ENCODE measurements at regions of chr21 and their contacts with region 1.

Region 1: DNA sequence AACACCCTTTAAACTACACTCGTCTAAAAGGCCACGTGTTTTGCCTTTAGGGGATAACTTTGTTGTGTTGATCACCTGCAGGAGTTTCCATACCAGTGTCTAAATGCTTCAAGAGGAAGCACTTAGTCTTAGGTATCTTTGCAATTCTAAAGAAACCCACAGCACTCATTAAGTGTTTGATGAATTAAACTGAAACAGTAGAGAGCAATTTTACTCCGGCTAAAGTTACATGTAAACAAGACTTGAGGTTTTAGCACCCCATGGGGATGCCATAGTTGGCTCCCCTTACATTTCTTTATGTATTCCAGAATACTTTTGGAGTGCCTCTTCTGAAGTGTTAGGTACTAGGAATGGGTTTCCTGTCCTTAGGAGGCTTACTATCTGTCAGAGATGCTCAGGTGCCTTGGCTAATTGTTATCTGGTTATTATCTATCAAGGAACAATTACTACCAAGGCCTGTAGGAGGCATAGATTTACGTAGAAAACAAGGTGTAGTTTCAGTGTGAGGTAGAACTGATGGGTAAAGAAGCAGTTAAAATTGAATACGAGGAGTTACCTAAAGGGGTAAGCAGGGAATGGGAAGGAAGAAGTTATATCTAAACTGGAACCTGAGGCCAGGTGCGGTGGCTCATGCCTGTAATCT is 176.8 kb upstream of the SAMSN1 start:
- DNase-seq: no peak
- ATAC-seq: no peak
- H3K4me3 ChIP-seq: no peak overlapping the region
- H3K4me3 Mint-ChIP-seq: no peak overlapping the region
- H3K27ac ChIP-seq: no peak overlapping the region
- H3K27ac Mint-ChIP-seq: peak overlapping the region in 1 of 9 donors; percentile 71
- H3K4me1 ChIP-seq: no peaks in the 10 kb centered on the region
- H3K4me1 Mint-ChIP-seq: peaks cover 0 to 31% (median 5%) of the 10 kb centered on the region in 7 donors
- H3K27me3 ChIP-seq: no peaks in the 10 kb centered on the region
- H3K27me3 Mint-ChIP-seq: no peaks in the 10 kb centered on the region

Region 2: DNA sequence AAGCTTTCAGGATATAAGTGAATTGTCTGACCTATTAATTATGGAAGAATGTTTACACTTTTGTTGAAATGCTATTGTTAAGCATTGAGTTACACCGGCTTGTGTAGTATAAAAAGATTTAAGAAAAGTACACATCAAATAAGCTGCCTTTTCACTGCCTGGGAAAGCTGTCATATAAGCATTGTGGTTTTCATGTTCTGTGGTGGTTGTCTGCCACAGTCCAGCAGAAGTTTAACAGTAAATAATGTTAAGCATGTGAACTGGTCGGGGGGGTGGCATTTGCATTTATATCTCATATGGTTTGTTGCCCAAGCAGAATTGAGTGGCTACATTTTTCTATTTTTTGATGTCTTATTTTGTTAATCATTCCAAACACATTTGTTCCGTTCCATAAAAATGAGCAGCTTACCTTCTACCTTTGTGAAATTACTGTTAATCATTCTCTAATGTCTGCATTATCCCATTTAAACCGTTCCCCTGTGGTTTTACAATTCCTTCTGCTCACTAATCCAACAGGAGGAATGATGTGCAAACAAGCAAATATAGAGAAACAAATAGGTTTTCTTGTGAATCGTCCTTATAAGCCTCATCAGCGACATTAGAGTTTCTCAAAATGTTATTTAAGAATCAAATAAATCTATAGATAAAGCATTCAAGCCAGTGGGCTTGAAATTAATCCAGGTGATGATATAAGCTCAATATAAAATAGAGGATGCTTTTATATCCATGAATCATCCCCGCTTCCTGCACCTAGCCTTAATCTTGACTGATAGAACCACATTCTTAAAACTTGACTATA is 16.1 kb before region 1 on chr21:
- CTCF ChIA-PET with region 1: no interaction called
- POLR2A ChIA-PET with region 1: no interaction called
- intact Hi-C with region 1: loop called in 1 of 2 experiments (anchors 1 kb)
- DNase-seq: no peak
- ATAC-seq: no peak
- H3K4me3 ChIP-seq: no peak overlapping the region
- H3K4me3 Mint-ChIP-seq: no peak overlapping the region
- H3K27ac ChIP-seq: no peak overlapping the region
- H3K27ac Mint-ChIP-seq: no peak overlapping the region
- H3K4me1 ChIP-seq: no peaks in the 10 kb centered on the region
- H3K4me1 Mint-ChIP-seq: peaks cover 0 to 15% (median 0%) of the 10 kb centered on the region in 7 donors
- H3K27me3 ChIP-seq: no peaks in the 10 kb centered on the region
- H3K27me3 Mint-ChIP-seq: no peaks in the 10 kb centered on the region

Region 3: GRCh38 chr21:14773777-14774345 is 50.9 kb after region 1 on chr21:
- CTCF ChIA-PET with region 1: no interaction called
- POLR2A ChIA-PET with region 1: no interaction called
- intact Hi-C with region 1: no loop called
- DNase-seq: peak in 8 of 9 donors; percentile 8 to 57 (median 37)
- ATAC-seq: peak; percentile 74
- H3K4me3 ChIP-seq: no peak overlapping the region
- H3K4me3 Mint-ChIP-seq: no peak overlapping the region
- H3K27ac ChIP-seq: no peak overlapping the region
- H3K27ac Mint-ChIP-seq: no peak overlapping the region
- H3K4me1 ChIP-seq: no peaks in the 10 kb centered on the region
- H3K4me1 Mint-ChIP-seq: peaks cover 0 to 6% (median 0%) of the 10 kb centered on the region in 7 donors
- H3K27me3 ChIP-seq: peaks cover 0 to 3% of the 10 kb centered on the region in 2 donors
- H3K27me3 Mint-ChIP-seq: peaks cover 0 to 11% (median 0%) of the 10 kb centered on the region in 5 donors

Region 4: GRCh38 chr21:14797543-14797942 is 74.6 kb after region 1 on chr21:
- CTCF ChIA-PET with region 1: no interaction called
- POLR2A ChIA-PET with region 1: no interaction called
- intact Hi-C with region 1: no loop called
- DNase-seq: no peak
- ATAC-seq: no peak
- H3K4me3 ChIP-seq: no peak overlapping the region
- H3K4me3 Mint-ChIP-seq: no peak overlapping the region
- H3K27ac ChIP-seq: no peak overlapping the region
- H3K27ac Mint-ChIP-seq: no peak overlapping the region
- H3K4me1 ChIP-seq: no peaks in the 10 kb centered on the region
- H3K4me1 Mint-ChIP-seq: no peaks in the 10 kb centered on the region
- H3K27me3 ChIP-seq: no peaks in the 10 kb centered on the region
- H3K27me3 Mint-ChIP-seq: peaks cover 0 to 17% (median 4%) of the 10 kb centered on the region in 5 donors

Measured in naive thymus-derived CD4-positive, alpha-beta T cell (primary cell).